SK-N-SH (cell line): ENCODE measurements at regions of chrX and their contacts with region 1.

Region 1: GRCh38 chrX:84064164-84064563 is 123.8 kb downstream of the RPS6KA6 start:
- DNase-seq: no peak
- H3K4me3 ChIP-seq: no peak overlapping the region
- H3K27ac ChIP-seq: no peak overlapping the region
- H3K4me1 ChIP-seq: no peaks in the 10 kb centered on the region
- H3K27me3 ChIP-seq: no peaks in the 10 kb centered on the region; the same call in 1 of the 2 replicates
- CTCF ChIP-seq: no peak
- EP300 ChIP-seq: no peak
- RAD21 ChIP-seq: no peak

Region 2: GRCh38 chrX:84046403-84046984 is 17.7 kb before region 1 on chrX:
- CTCF ChIA-PET with region 1: interaction called, 11 read pairs
- POLR2A ChIA-PET with region 1: no interaction called
- DNase-seq: peak; percentile 30
- H3K4me3 ChIP-seq: no peak overlapping the region; a peak in 1 of 4 replicates
- H3K27ac ChIP-seq: no peak overlapping the region
- H3K4me1 ChIP-seq: peaks cover 0 to 5% of the 10 kb centered on the region in 2 experiments; a peak in 1 of 4 replicates
- H3K27me3 ChIP-seq: no peaks in the 10 kb centered on the region
- CTCF ChIP-seq: peak; percentile 90
- EP300 ChIP-seq: no peak
- RAD21 ChIP-seq: peak; percentile 77